ENCODE measurements at regions of chr6 and their contacts with region 1.

Region 1: GRCh38 chr6:56595490-56596122 is 47.1 kb downstream of the DST start:
- DNase-seq: peak; percentile 29
- H3K4me3 ChIP-seq: no peak overlapping the region
- H3K27ac ChIP-seq: no peak overlapping the region
- H3K4me1 ChIP-seq: no peaks in the 10 kb centered on the region
- H3K27me3 ChIP-seq: no peaks in the 10 kb centered on the region
- CTCF ChIP-seq: peak; percentile 56 to 61

Region 2: GRCh38 chr6:56314683-56315523 is 280.7 kb before region 1 on chr6:
- CTCF ChIA-PET with region 1: no interaction called
- dilution Hi-C with region 1: no loop called
- in situ Hi-C with region 1: no loop called
- intact Hi-C with region 1: loop called (anchors 1 kb)
- DNase-seq: peak; percentile 41
- H3K4me3 ChIP-seq: no peak overlapping the region
- H3K27ac ChIP-seq: no peak overlapping the region
- H3K4me1 ChIP-seq: no peaks in the 10 kb centered on the region
- H3K27me3 ChIP-seq: no peaks in the 10 kb centered on the region
- CTCF ChIP-seq: peak; percentile 86

Region 3: DNA sequence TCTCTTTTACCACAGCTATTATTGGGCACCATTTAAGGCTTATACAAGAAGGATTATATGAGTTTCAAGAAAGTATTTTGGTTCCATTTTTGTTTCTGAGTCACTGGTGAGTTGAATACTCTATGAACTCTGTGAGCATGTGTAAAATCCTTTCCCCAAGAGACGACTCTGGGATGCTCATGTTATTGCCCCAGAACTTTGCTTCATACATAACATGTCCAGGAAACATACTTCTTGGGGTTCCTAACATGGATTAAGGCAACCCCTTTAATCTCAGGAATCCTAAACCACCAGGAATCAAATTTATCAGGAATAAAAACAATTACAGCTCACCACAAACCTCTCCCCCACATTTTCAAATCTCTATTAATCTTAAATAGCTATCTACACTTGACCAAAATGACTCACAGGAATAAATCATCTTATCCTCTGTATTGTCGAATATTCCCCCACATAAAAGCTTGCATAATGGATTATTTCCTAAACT is 230.7 kb before region 1 on chr6:
- CTCF ChIA-PET with region 1: interaction called, 3 read pairs
- dilution Hi-C with region 1: loop called (anchors 5 kb)
- in situ Hi-C with region 1: no loop called
- intact Hi-C with region 1: loop called (anchors 5 kb)
- DNase-seq: peak; percentile 68
- H3K4me3 ChIP-seq: no peak overlapping the region
- H3K27ac ChIP-seq: peak overlapping the region; percentile 33
- H3K4me1 ChIP-seq: peaks cover 28% of the 10 kb centered on the region
- H3K27me3 ChIP-seq: no peaks in the 10 kb centered on the region
- CTCF ChIP-seq: no peak

Region 4: DNA sequence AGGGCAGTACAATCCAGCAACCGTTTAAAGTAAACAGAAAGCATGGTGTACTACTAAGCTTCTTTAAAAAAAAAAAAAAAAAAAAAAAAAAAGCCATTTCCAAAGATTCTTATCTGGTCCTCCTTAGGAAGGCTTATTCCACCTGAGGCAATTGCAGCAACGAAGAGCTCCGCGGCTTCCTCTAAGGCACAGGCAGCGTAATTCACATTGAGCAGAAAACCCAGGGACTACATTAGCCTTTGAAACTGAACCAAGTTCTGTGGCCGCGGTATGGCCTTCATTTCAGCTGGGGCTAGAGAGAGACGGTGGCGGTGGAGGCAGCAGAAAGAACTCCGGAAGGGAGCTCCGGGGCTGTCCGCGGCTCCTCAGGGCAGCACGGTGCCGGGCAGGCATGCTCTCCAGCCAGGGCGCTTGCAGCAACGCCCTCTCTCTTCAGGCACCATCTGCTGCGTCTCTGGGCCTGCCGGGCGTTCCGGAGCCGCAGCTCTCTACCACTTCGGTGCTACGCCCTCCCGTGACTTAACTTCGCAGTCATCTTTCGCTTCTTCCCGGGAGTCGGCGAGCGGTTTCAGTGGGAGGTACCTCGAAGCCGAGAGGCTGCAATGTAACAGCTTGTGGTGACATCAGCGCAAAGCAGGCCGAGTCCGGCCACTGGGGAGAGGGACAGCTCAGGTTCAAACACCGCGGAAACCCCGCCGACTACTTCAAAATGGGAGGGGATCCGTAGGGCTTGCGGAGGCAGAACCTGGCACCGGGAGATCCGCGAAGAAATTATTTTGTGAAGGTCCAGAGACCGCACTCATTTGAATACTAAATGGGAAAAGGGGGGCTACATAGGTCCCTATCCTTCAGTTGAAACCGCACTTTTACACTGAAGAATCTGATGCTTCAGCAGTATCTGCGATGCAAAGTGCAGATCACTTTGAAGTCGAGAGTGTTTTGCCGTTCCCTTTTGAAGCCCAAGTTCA is 53.0 kb before region 1 on chr6:
- CTCF ChIA-PET with region 1: interaction called, 21 read pairs
- dilution Hi-C with region 1: no loop called
- in situ Hi-C with region 1: no loop called
- intact Hi-C with region 1: no loop called
- DNase-seq: peak; percentile 99
- H3K4me3 ChIP-seq: peak overlapping the region; percentile 55 to 64 (median 59)
- H3K27ac ChIP-seq: peak overlapping the region; percentile 96
- H3K4me1 ChIP-seq: peaks cover 18% of the 10 kb centered on the region
- H3K27me3 ChIP-seq: no peaks in the 10 kb centered on the region
- CTCF ChIP-seq: peak in 1 of 2 donors; percentile 33

Measured in mammary epithelial cell (primary cell).